ENCODE measurements at regions of chr5 and their contacts with region 1.

Region 1: GRCh38 chr5:62168506-62169281 is 137.3 kb upstream of the KIF2A start:
- DNase-seq: no peak
- H3K4me3 ChIP-seq: no peak overlapping the region
- H3K27ac ChIP-seq: no peak overlapping the region
- H3K4me1 ChIP-seq: no peaks in the 10 kb centered on the region
- H3K27me3 ChIP-seq: peaks cover 0 to 2% of the 10 kb centered on the region in 2 experiments
- CTCF ChIP-seq: no peak
- POLR2A ChIP-seq: no peak

Region 2: GRCh38 chr5:60604771-60605170 is 1563.9 kb before region 1 on chr5:
- CTCF ChIA-PET with region 1: no interaction called
- POLR2A ChIA-PET with region 1: interaction called, 14 read pairs
- dilution Hi-C with region 1: no loop called
- intact Hi-C with region 1: no loop called
- DNase-seq: no peak
- H3K4me3 ChIP-seq: no peak overlapping the region
- H3K27ac ChIP-seq: no peak overlapping the region
- H3K4me1 ChIP-seq: no peaks in the 10 kb centered on the region
- H3K27me3 ChIP-seq: no peaks in the 10 kb centered on the region
- CTCF ChIP-seq: no peak
- POLR2A ChIP-seq: no peak

Measured in endothelial cell of umbilical vein (primary cell).